ENCODE measurements at regions of chr11 and their contacts with region 1.

Region 1: DNA sequence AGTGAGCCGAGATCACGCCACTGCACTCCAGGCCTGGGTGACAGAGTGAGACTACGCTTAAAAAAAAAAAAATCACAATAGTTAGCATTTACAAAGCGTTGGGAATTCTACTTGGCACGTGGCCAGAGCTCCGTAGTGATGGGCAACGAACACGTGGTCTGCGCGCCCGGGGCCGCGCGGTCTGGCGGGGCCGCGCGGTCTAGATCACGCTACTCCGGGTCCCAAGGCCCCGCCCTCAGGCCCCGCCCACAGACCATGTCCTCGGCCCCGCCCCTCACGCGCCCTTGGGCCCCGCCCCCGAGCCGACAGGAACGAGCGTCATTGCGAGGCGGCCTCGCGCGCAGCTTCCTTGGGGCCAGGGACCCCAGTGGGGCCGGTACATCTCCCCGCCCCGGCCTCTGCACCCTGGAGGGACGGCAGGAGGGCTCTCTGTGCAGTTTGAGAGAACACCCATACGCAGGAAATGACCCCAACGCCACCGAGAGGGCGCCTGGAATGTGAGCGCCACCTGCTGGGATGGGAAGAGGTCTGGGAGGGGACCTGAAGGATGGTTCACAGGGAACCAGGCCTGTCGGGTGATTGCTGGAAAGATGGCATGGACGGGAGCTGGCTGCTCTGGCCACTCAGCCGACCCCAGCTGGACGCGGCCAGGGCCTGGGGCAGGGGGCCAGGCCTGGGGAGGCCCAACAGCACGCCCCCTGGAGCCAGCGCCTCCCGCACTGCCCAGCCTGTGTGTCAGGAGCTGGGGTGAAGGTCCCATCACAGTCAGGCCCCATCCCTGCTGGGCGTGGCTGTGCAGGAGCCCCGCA is 2.0 kb upstream of the PTDSS2 start:
- DNase-seq: peak; percentile 88 to 90
- ATAC-seq: peak; percentile 82 to 85
- H3K4me3 ChIP-seq: peak overlapping the region; percentile 66 to 94 (median 85)
- H3K27ac ChIP-seq: peak overlapping the region; percentile 84 to 98 (median 96)
- H3K4me1 ChIP-seq: peaks cover 22 to 25% of the 10 kb centered on the region in 2 donors
- H3K27me3 ChIP-seq: peaks cover 0 to 10% (median 6%) of the 10 kb centered on the region in 3 donors
- CTCF ChIP-seq: peak; percentile 68 to 90 (median 80)
- POLR2A ChIP-seq: peak; percentile 78 to 80

Region 2: DNA sequence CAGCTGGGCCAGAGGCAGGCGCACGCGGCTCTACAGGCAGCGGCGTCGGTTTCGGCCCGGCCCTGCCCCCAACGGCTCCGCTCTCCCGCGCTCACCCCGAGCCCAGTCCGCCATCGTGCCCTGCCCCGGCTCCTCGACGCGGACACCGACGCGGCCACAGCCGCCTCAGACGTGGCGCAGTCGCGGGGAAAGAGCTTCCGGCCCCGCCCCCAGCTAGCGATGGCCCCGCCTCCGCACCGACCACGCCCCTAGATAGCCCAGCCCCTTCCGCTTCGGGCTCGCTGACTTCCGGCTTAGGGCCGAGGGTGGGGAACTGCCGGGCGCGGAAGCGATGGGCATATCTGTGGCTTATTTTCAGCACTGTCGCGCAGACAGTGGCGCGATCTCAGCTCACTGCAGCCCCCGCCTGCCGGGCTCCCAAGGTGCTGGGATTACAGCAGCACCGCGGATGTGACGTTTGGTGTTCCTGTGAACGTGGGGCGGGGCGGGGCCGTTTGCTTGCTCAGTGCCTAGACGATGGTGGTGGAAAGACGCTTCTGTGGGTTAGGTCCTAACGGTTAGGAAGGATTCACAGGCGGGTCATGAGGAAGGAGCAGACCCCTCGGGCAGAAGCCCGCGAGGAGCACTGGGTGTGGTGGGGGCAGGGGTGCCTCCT is 240.8 kb before region 1 on chr11 and contains the starts of genes BET1L and RIC8A:
- in situ Hi-C with region 1: no loop called
- intact Hi-C with region 1: loop called (anchors 10 kb)
- DNase-seq: peak; percentile 87 to 96
- ATAC-seq: peak; percentile 84 to 87
- H3K4me3 ChIP-seq: peak within 1 kb of the TSS; percentile 72 to 99 (median 84)
- H3K27ac ChIP-seq: peak within 1 kb of the TSS; percentile 95 to 100 (median 98)
- H3K4me1 ChIP-seq: peaks cover 26 to 41% of the 10 kb centered on the region in 2 donors
- H3K27me3 ChIP-seq: no peaks in the 10 kb centered on the region
- CTCF ChIP-seq: no peak
- POLR2A ChIP-seq: peak; percentile 94 to 96
- total RNA-seq, gene BET1L: 11.3 to 15.9 (median 12.8) TPM
- total RNA-seq, gene RIC8A: 35.6 to 68.5 (median 47.8) TPM

Region 3: DNA sequence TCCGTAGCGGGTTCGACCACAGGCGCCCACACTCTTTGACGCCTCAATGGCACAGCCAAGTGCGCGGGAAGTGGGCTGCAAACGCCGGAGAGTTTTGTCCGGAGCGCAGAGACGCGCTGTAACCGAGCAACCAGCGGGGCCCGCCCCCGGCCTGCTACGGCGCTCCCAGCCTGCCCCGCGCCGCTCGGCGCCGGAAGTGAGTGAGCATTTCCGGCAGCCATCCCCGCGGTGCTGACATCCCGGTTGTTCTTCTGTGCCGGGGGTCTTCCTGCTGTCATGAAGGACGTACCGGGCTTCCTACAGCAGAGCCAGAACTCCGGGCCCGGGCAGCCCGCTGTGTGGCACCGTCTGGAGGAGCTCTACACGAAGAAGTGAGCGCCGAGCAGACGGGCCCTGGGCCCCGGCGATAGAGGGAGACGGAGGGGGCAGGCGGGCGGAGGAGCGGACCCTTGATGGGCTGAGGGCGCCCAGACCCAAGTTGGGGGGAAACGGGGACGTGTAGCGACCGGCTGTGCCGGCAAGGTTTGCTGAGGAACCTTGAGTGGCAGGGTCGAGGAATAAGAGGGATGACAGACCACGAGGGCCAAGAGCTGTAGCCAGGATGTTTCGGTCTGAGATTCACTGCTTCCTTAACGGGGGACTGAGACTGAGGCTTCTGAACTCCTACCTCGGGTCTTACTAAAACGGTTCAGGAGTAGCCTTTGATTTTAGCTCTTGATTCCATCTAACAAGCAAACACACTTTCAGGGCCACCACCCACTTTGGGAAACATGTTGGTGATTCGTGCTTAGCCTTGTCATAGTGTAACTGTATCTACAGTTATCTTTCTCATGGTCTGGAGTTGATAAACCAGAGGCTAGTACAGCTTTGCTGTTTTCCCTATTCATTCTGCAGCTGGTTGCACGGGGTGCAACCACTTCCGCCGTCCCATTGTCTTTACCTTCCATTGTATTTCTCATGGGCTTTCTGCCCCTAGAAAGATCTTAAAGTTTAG is 211.1 kb before region 1 on chr11 and contains the start of gene PSMD13:
- in situ Hi-C with region 1: no loop called
- intact Hi-C with region 1: loop called (anchors 1 kb)
- DNase-seq: peak; percentile 57 to 78
- ATAC-seq: peak; percentile 87 to 91
- H3K4me3 ChIP-seq: peak within 1 kb of the TSS; percentile 88 to 100 (median 98)
- H3K27ac ChIP-seq: peak within 1 kb of the TSS; percentile 97 to 99 (median 97)
- H3K4me1 ChIP-seq: peaks cover 42 to 43% of the 10 kb centered on the region in 2 donors
- H3K27me3 ChIP-seq: no peaks in the 10 kb centered on the region
- CTCF ChIP-seq: no peak
- POLR2A ChIP-seq: peak; percentile 71 to 94
- total RNA-seq, gene PSMD13: 128 to 189 (median 163) TPM

Region 4: GRCh38 chr11:355581-356458 is 92.3 kb before region 1 on chr11:
- in situ Hi-C with region 1: no loop called
- intact Hi-C with region 1: no loop called
- DNase-seq: peak; percentile 73 to 77
- ATAC-seq: peak; percentile 69 to 72
- H3K4me3 ChIP-seq: peak overlapping the region; percentile 55 to 57 (median 56)
- H3K27ac ChIP-seq: peak overlapping the region; percentile 91 to 93 (median 92)
- H3K4me1 ChIP-seq: peaks cover 24 to 29% of the 10 kb centered on the region in 2 donors
- H3K27me3 ChIP-seq: peaks cover 0 to 5% (median 4%) of the 10 kb centered on the region in 3 donors
- CTCF ChIP-seq: no peak
- POLR2A ChIP-seq: peak; percentile 29 to 47

Region 5: DNA sequence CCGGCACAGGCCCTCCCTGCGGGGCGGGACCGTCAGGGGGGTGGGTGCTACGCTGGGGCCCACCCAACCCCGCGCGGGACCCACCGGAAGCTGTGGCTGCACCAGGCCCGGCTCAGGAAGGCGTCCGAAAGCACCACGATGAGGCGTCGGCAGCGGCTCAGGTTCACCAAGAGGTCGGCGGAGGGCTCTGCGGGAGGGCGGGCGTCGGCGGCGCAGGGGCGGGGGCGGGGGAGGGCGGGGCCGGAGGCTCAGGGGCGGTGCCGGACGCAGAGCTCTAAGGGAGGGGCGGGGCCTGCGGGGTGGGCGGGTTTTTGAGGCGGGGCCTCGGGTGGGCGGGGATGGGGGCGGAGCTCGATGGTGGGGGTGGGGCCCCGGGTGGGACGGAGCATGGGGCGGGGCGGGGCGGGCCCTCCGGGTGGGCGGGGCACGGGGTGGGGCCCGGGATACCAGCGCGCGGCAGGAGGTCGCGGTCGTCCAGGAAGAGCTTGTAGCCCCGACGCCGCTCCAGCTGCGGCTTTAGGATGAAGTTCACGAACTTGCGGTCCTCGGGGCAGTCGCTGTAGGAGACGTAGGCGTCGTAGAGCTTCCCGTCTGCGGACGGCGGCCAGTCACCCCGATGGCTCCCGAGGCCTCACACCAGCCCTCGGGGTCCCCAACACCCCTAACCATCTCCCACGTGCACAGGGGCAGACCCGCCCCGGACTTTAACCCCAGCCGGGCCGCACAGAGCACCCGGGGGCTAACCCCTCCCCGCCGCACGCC is 41.0 kb before region 1 on chr11:
- in situ Hi-C with region 1: no loop called
- intact Hi-C with region 1: loop called (anchors 1 kb)
- DNase-seq: peak; percentile 40 to 69
- ATAC-seq: peak; percentile 67 to 79
- H3K4me3 ChIP-seq: peak overlapping the region; percentile 57 to 85 (median 67)
- H3K27ac ChIP-seq: peak overlapping the region; percentile 47 to 76 (median 59)
- H3K4me1 ChIP-seq: peaks cover 0 to 10% of the 10 kb centered on the region in 2 donors
- H3K27me3 ChIP-seq: peaks cover 3 to 41% (median 4%) of the 10 kb centered on the region in 3 donors
- CTCF ChIP-seq: no peak
- POLR2A ChIP-seq: no peak